Naive thymus-derived CD4-positive, alpha-beta T cell (primary cell): ENCODE measurements at regions of chr11 and their contacts with region 1.

Region 1: GRCh38 chr11:2444821-2445745 is at the start of gene KCNQ1:
- DNase-seq: peak in 8 of 9 donors; percentile 26 to 75 (median 46)
- ATAC-seq: peak; percentile 74
- H3K4me3 ChIP-seq: peak within 1 kb of the TSS; percentile 71
- H3K4me3 Mint-ChIP-seq: peak within 1 kb of the TSS; percentile 93 to 99 (median 96)
- H3K27ac ChIP-seq: peak within 1 kb of the TSS; percentile 52
- H3K27ac Mint-ChIP-seq: peak within 1 kb of the TSS; percentile 73 to 92 (median 89)
- H3K4me1 ChIP-seq: peaks cover 22 to 56% of the 10 kb centered on the region in 2 donors
- H3K4me1 Mint-ChIP-seq: peaks cover 22 to 53% (median 41%) of the 10 kb centered on the region in 7 donors
- H3K27me3 ChIP-seq: no peaks in the 10 kb centered on the region
- H3K27me3 Mint-ChIP-seq: peaks cover 0 to 20% (median 0%) of the 10 kb centered on the region in 5 donors
- total RNA-seq, gene KCNQ1: 14.7 to 46.4 (median 41.4) TPM

Region 2: DNA sequence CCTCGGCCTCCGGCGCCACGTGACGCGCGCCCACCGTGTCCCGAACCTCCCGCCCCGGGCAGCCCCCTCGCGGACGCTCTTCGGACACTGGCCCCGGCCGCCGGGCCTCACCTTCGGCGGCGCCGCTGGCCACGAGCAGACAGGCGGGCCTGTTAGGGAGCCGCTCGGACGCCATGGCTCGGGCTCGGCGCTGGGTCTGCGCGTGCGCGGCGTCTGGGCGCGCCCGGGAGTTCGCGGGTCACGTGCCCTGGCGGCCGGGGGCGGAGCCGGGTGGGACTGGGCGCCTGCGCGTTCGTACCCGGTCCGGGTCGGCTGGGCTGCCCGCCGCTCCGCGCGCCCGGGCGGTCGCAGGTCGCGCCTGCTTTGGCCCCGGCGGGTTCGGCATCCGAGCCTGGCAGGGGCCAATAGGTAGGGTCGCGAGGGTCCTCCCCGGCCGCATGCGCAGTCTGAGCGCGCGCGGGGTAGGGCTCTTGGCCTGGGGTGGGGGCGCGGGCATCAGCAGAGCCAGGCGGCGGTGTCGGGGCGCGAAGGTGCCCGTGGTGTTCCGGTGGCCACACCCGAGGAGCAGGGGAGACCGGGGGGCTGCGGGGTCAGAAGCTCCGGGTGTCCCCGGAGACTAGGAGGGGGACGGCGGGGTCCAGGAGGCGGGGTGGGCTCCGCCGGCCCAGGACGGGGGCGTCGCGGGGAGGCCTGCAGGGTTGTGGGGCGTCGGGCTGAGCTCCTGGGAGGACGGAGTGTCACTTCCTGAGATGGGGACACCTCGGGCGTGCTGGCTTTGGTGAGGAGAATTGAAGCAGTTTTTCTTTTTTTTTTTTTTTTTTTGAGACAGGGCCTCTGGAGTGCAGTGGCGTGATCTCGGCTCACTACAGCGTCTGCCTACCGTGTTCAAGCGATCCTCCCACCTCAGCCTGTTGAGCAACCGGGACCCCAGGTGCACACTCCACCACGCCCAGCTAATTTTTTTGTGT is 1667.5 kb before region 1 on chr11 and contains the start of gene GATD1:
- CTCF ChIA-PET with region 1: no interaction called
- POLR2A ChIA-PET with region 1: no interaction called
- intact Hi-C with region 1: no loop called
- DNase-seq: peak; percentile 86 to 99 (median 93)
- ATAC-seq: peak; percentile 93
- H3K4me3 ChIP-seq: peak within 1 kb of the TSS; percentile 59
- H3K4me3 Mint-ChIP-seq: peak within 1 kb of the TSS; percentile 72 to 91 (median 83)
- H3K27ac ChIP-seq: peak within 1 kb of the TSS; percentile 85
- H3K27ac Mint-ChIP-seq: peak within 1 kb of the TSS; percentile 40 to 92 (median 78)
- H3K4me1 ChIP-seq: peaks cover 12 to 14% of the 10 kb centered on the region in 2 donors
- H3K4me1 Mint-ChIP-seq: peaks cover 7 to 29% (median 23%) of the 10 kb centered on the region in 7 donors
- H3K27me3 ChIP-seq: no peaks in the 10 kb centered on the region
- H3K27me3 Mint-ChIP-seq: no peaks in the 10 kb centered on the region
- total RNA-seq, gene GATD1: 37.8 to 59.2 (median 52.9) TPM

Region 3: GRCh38 chr11:1763796-1764661 is 681.1 kb before region 1 on chr11 and contains the start of gene CTSD:
- CTCF ChIA-PET with region 1: no interaction called
- POLR2A ChIA-PET with region 1: no interaction called
- intact Hi-C with region 1: no loop called
- DNase-seq: peak; percentile 76 to 99 (median 83)
- ATAC-seq: peak; percentile 87
- H3K4me3 ChIP-seq: peak within 1 kb of the TSS; percentile 70
- H3K4me3 Mint-ChIP-seq: peak within 1 kb of the TSS; percentile 86 to 96 (median 91)
- H3K27ac ChIP-seq: peak within 1 kb of the TSS; percentile 82
- H3K27ac Mint-ChIP-seq: peak within 1 kb of the TSS; percentile 84 to 92 (median 87)
- H3K4me1 ChIP-seq: peaks cover 33 to 39% of the 10 kb centered on the region in 2 donors
- H3K4me1 Mint-ChIP-seq: peaks cover 14 to 41% (median 33%) of the 10 kb centered on the region in 7 donors
- H3K27me3 ChIP-seq: no peaks in the 10 kb centered on the region
- H3K27me3 Mint-ChIP-seq: no peaks in the 10 kb centered on the region
- total RNA-seq, gene CTSD: 103 to 378 (median 186) TPM

Region 4: GRCh38 chr11:2377511-2378443 is 67.3 kb before region 1 on chr11:
- CTCF ChIA-PET with region 1: no interaction called
- POLR2A ChIA-PET with region 1: no interaction called
- intact Hi-C with region 1: loop called in 1 of 2 experiments (anchors 2 kb)
- DNase-seq: peak in 8 of 9 donors; percentile 34 to 73 (median 52)
- ATAC-seq: peak; percentile 54
- H3K4me3 ChIP-seq: peak overlapping the region; percentile 83
- H3K4me3 Mint-ChIP-seq: peak overlapping the region; percentile 71 to 89 (median 84)
- H3K27ac ChIP-seq: peak overlapping the region; percentile 89
- H3K27ac Mint-ChIP-seq: peak overlapping the region in 7 of 9 donors; percentile 57 to 89 (median 81)
- H3K4me1 ChIP-seq: peaks cover 19 to 21% of the 10 kb centered on the region in 2 donors
- H3K4me1 Mint-ChIP-seq: peaks cover 13 to 44% (median 20%) of the 10 kb centered on the region in 7 donors
- H3K27me3 ChIP-seq: no peaks in the 10 kb centered on the region
- H3K27me3 Mint-ChIP-seq: peaks cover 0 to 7% (median 0%) of the 10 kb centered on the region in 5 donors

Region 5: DNA sequence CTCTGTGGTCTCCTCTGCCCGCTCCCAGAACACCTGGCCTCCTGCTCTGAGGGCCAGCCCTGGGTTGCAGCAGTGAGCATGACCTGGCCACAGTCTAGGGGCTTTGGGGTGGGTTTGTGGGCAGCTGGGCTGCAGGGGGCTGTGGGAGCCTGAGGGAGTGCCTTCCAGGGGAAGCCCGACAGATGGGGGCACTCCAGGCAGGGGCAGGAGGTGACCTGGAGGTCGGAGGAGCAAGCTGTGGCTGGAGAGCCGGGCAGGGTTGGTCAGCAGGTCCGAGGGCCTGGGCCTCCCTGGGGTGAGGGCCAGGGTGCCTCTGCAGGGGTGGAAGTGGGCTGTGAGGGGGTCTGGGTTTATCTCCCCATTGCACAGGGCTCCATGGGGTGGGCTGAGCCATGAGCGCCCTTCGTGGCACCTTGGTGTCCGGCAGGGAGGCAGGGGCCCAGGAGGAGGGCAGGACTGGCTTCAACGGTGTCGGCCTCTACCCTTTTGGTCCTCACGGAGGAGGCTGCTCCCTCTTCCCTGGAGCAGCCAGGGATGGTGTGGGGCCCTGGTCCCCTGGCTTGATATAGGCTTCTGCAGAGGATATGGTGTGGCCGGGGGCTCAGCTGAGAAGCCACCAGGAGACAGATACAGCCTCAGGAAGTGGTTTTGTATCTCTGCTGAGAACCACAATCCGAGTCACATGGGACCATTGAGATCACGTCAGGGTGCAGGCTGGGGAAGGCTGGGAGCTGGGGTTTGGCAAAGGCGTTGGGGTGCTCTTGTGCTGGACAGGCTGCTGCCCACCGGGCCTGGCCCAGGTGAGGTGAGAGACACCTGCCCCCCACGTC is 22.0 kb after region 1 on chr11:
- CTCF ChIA-PET with region 1: interaction called, 6 read pairs
- POLR2A ChIA-PET with region 1: interaction called, 7 read pairs
- intact Hi-C with region 1: loop called (anchors 1 to 2 kb)
- DNase-seq: peak in 8 of 9 donors; percentile 53 to 80 (median 74)
- ATAC-seq: peak; percentile 95
- H3K4me3 ChIP-seq: peak overlapping the region; percentile 45
- H3K4me3 Mint-ChIP-seq: peak overlapping the region; percentile 75 to 93 (median 84)
- H3K27ac ChIP-seq: peak overlapping the region; percentile 52
- H3K27ac Mint-ChIP-seq: peak overlapping the region; percentile 57 to 96 (median 79)
- H3K4me1 ChIP-seq: peaks cover 17 to 57% of the 10 kb centered on the region in 2 donors
- H3K4me1 Mint-ChIP-seq: peaks cover 35 to 93% (median 65%) of the 10 kb centered on the region in 7 donors
- H3K27me3 ChIP-seq: no peaks in the 10 kb centered on the region
- H3K27me3 Mint-ChIP-seq: peaks cover 0 to 12% (median 0%) of the 10 kb centered on the region in 5 donors

Region 6: GRCh38 chr11:2480874-2481220 is 35.8 kb after region 1 on chr11:
- CTCF ChIA-PET with region 1: no interaction called
- POLR2A ChIA-PET with region 1: no interaction called
- intact Hi-C with region 1: loop called in 1 of 2 experiments (anchors 5 kb)
- DNase-seq: no peak
- ATAC-seq: peak; percentile 92
- H3K4me3 ChIP-seq: no peak overlapping the region
- H3K4me3 Mint-ChIP-seq: peak overlapping the region; percentile 49 to 84 (median 74)
- H3K27ac ChIP-seq: no peak overlapping the region
- H3K27ac Mint-ChIP-seq: peak overlapping the region in 6 of 9 donors; percentile 7 to 82 (median 56)
- H3K4me1 ChIP-seq: peaks cover 0 to 6% of the 10 kb centered on the region in 2 donors
- H3K4me1 Mint-ChIP-seq: peaks cover 15 to 52% (median 38%) of the 10 kb centered on the region in 7 donors
- H3K27me3 ChIP-seq: no peaks in the 10 kb centered on the region
- H3K27me3 Mint-ChIP-seq: peaks cover 0 to 4% (median 2%) of the 10 kb centered on the region in 5 donors

Region 7: DNA sequence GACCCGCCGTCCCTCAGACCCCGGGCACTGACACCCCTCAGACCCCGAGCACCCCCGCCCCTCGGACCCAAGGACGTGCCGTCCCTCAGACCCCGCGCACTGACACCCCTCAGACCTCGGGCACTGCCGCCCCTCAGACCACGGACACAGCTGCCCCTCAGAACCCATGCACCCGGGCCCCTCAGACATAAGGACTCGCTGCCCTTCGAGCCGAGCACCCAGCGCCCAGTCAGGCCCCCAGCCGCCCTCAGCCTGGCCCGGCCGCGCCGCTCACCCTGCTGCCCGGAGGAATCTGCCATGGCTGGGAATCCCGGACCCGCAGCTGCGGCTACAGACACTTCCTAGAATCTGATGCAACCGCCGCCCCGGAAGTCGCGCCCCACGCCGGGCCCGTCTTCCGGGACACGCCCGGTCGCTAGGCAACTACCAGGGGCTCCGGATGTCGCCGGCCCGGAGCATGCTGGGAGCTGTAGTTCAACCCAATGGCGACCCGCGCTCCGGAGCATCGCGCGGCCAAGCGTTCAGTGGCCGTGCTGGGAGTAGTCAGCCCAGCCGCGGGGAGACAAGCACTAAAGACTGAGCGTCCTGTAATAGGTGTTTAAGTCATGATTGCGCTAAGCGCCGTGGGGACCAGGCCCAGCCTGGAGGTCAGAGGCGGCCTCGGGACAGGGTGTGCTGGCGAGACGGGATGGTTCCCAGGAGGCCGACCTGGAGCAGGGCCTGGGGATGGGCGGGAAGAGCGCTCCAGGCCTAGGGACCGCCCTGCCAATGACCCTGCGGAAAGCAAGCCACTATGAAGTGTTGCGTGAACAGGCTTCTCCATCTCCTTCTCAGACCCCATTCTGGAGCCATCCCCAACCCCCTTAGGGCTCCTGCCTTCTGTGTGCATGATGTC is 612.2 kb after region 1 on chr11 and contains the start of gene CARS1:
- CTCF ChIA-PET with region 1: no interaction called
- POLR2A ChIA-PET with region 1: no interaction called
- intact Hi-C with region 1: loop called in 1 of 2 experiments (anchors 2 kb)
- DNase-seq: peak; percentile 82 to 93 (median 89)
- ATAC-seq: peak; percentile 99
- H3K4me3 ChIP-seq: peak within 1 kb of the TSS; percentile 85
- H3K4me3 Mint-ChIP-seq: peak within 1 kb of the TSS; percentile 86 to 95 (median 89)
- H3K27ac ChIP-seq: peak within 1 kb of the TSS; percentile 91
- H3K27ac Mint-ChIP-seq: peak within 1 kb of the TSS; percentile 44 to 89 (median 87)
- H3K4me1 ChIP-seq: peaks cover 14% of the 10 kb centered on the region in 2 donors
- H3K4me1 Mint-ChIP-seq: peaks cover 25 to 42% (median 39%) of the 10 kb centered on the region in 7 donors
- H3K27me3 ChIP-seq: no peaks in the 10 kb centered on the region
- H3K27me3 Mint-ChIP-seq: no peaks in the 10 kb centered on the region
- total RNA-seq, gene CARS1: 27.8 to 70.4 (median 53.7) TPM